ENCODE measurements at regions of chr12 and their contacts with region 1.

Region 1: DNA sequence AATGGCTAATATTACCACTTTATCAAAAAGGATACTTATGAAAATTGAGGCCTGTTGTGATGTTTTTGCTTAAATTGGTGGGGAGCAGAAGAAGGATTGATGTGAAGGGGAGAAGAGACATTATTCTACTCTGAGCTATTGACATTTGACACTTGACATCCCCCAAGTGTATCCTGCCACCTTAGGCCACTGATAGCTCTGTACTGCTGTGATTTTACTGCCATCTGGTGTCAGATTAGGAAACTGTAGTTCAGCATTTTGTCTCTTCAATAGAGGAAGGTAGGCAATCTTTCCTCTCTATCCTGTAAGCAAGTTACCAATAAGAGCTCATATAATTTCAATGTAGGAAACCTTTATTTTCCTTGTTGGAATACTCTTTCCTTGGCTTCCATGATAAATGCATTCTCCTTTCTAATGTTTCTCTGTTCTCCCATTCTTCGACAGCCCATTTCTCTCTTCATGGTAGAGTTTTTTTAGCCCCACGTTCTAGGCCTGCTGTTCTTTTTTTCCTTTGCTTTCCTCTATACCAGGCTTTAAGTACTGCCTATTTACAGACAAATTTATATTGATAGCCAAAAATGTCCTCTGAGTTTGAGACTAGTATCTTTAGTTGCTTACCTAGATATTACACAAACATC is 46.3 kb downstream of the PPHLN1 start:
- DNase-seq: peak; percentile 4 to 43
- H3K4me3 ChIP-seq: no peak overlapping the region
- H3K27ac ChIP-seq: no peak overlapping the region
- H3K4me1 ChIP-seq: no peaks in the 10 kb centered on the region
- H3K27me3 ChIP-seq: no peaks in the 10 kb centered on the region
- CTCF ChIP-seq: peak; percentile 79

Region 2: DNA sequence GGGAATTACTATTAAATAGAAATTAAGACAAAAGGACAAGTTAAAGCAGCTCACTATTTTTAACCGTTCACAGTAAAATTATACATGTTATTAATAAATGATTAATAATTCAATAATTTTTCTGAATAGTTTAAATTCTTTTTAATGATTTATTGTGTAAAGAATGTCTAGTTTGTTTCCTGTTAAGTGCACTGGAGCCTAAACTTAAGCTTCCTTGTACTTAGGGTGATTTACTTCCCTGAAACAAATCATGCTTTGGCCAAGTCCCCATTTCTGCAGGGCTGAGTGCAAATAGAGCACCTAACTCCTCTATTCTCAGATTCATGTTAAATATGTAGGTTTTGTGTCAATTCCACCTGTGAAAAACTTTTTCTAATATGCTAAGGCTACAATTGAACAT is 1373.1 kb before region 1 on chr12:
- CTCF ChIA-PET with region 1: interaction called, 11 read pairs
- POLR2A ChIA-PET with region 1: no interaction called
- intact Hi-C with region 1: no loop called
- DNase-seq: no peak
- H3K4me3 ChIP-seq: no peak overlapping the region
- H3K27ac ChIP-seq: no peak overlapping the region
- H3K4me1 ChIP-seq: no peaks in the 10 kb centered on the region
- H3K27me3 ChIP-seq: no peaks in the 10 kb centered on the region
- CTCF ChIP-seq: no peak

Region 3: DNA sequence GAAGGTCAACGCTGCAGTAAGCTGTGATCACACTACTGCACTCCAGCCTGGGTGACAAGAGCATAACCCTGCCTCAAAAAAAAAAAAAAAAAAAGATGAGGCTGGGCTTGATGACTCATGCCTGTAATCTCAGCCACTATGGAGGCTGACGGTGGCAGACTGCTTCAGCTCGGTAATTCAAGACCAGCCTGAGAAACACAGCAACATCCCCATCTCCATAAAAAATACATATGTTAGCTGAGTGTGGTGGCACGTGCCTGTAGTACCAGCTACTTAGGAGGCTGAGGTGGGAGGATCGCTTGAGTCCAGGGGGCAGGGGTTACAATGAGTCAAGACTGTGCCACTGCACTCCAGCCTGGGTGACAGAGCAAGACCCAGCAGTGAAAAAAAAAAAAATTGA is 278.0 kb before region 1 on chr12:
- CTCF ChIA-PET with region 1: no interaction called
- POLR2A ChIA-PET with region 1: interaction called, 19 read pairs
- intact Hi-C with region 1: no loop called
- DNase-seq: peak in 1 of 2 experiments; percentile 27
- H3K4me3 ChIP-seq: no peak overlapping the region
- H3K27ac ChIP-seq: no peak overlapping the region
- H3K4me1 ChIP-seq: no peaks in the 10 kb centered on the region
- H3K27me3 ChIP-seq: no peaks in the 10 kb centered on the region
- CTCF ChIP-seq: no peak

Region 4: DNA sequence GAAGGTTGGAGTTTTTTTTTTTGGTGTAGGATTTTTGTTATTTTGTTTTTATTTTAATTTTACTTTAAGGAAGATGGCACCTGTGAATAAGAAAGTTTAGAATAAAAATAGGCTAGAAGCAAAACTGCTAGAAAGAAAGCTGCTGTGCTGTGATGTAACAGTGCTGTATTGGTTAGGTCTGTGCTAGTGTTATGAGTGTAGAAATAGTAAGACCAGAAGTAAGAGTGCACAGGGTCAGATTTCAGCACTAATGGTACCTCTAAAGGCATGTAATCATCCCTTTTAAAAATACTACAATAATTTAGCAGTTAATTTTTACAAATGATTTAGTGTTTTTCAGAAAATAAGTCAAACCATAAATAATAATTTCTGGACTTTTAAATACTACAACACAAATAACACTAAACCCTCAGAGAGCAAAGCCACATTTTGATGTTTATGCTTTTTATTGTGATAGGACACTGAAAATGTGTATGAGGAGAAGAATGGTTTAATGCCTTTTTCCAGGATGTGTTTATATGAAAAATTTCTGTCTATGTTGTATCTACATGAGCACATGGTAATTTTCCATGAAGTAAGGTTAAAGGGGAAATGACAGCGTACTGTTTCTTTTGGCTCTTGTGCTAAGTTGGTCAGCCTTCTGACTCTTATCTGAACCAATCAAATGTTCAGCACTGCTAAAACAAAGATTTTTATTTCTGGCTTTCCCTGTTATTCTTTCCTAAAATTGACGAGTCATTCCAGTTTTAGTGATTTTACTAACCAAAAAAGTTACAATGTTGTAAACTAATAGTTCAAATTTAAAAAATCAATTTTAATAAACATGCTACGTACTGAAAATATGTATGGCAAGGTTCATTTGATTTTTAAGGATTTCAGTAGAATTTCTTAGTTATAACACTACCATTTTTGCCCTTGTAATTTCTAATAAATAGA is 49.8 kb after region 1 on chr12:
- CTCF ChIA-PET with region 1: interaction called, 14 read pairs
- POLR2A ChIA-PET with region 1: no interaction called
- intact Hi-C with region 1: no loop called
- DNase-seq: no peak
- H3K4me3 ChIP-seq: no peak overlapping the region
- H3K27ac ChIP-seq: no peak overlapping the region
- H3K4me1 ChIP-seq: 0 out of 2 replicates have a peak, but pooled peaks cover 6% of the 10 kb centered on the region
- H3K27me3 ChIP-seq: no peaks in the 10 kb centered on the region
- CTCF ChIP-seq: no peak